ENCODE measurements at regions of chr10 and their contacts with region 1.

Region 1: GRCh38 chr10:14185316-14186045 is 145.2 kb downstream of the FRMD4A start:
- DNase-seq: peak; percentile 84
- ATAC-seq: peak; percentile 93
- H3K4me3 ChIP-seq: peak overlapping the region; percentile 15 to 31 (median 19); a peak in 5 of 6 replicates
- H3K27ac ChIP-seq: peak overlapping the region; percentile 75
- H3K4me1 ChIP-seq: peaks cover 21% of the 10 kb centered on the region
- H3K27me3 ChIP-seq: peaks cover 1 to 6% of the 10 kb centered on the region in 2 experiments; a peak in 3 of 5 replicates
- CTCF ChIP-seq: no peak
- EP300 ChIP-seq: no peak; a peak in 1 of 4 replicates
- POLR2A ChIP-seq: peak; percentile 89 to 100
- RAD21 ChIP-seq: peak; percentile 77

Region 2: GRCh38 chr10:13839430-13839990 is 346.0 kb before region 1 on chr10:
- CTCF ChIA-PET with region 1: no interaction called
- POLR2A ChIA-PET with region 1: no interaction called
- in situ Hi-C with region 1: no loop called
- intact Hi-C with region 1: no loop called
- DNase-seq: no peak
- ATAC-seq: no peak
- H3K4me3 ChIP-seq: no peak overlapping the region
- H3K27ac ChIP-seq: no peak overlapping the region
- H3K4me1 ChIP-seq: no peaks in the 10 kb centered on the region
- H3K27me3 ChIP-seq: no peaks in the 10 kb centered on the region
- CTCF ChIP-seq: no peak
- EP300 ChIP-seq: no peak
- POLR2A ChIP-seq: no peak
- RAD21 ChIP-seq: no peak

Region 3: DNA sequence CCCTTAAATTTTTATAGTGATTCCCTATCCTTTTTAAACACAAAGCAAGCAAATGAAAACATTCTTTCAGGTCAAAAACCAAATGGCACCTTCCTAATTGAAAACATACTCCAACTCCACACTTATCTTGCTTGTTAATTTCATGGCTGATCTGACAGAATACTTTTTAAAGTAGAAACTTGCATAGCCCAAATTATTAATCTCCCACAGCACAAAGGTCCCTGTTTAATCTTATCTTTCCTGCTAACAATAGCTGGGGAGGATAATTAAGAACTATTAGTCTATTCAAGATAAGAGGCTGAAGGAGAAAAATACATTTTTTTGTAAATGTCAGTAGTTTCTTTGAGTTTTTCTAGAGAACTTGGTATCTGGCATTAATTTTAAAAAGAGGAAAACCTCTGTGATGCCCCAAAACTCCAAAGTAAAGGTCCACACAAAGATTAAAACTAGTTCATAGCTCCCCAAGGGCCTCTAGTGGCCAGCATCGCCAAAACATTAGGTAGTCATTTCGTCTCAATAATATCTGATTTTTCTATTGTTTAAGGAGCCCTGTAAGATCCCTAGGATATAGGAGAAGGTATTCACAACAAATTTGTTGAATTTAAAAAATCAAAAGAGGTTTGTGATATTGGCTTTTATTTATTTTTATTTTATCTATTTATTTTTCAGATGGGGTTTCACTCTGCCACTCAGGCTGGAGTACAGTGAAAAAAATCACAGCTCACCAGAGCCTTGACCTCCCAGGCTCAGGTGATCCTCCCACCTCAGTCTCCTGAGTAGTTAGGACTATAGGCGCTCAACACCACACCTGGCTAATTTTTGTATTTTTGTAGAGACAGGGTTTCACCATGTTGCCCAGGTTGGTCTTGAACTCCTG is 637.6 kb after region 1 on chr10:
- CTCF ChIA-PET with region 1: no interaction called
- POLR2A ChIA-PET with region 1: no interaction called
- in situ Hi-C with region 1: loop called (anchors 25 kb)
- intact Hi-C with region 1: no loop called
- DNase-seq: peak; percentile 12
- ATAC-seq: peak; percentile 44; the same call in 1 of the 3 replicates
- H3K4me3 ChIP-seq: no peak overlapping the region
- H3K27ac ChIP-seq: no peak overlapping the region
- H3K4me1 ChIP-seq: no peaks in the 10 kb centered on the region
- H3K27me3 ChIP-seq: peaks cover 0 to 1% of the 10 kb centered on the region in 2 experiments; a peak in 1 of 5 replicates
- CTCF ChIP-seq: peak; percentile 55
- EP300 ChIP-seq: no peak
- POLR2A ChIP-seq: no peak
- RAD21 ChIP-seq: 0 out of 2 replicates have a peak, but pooled peaks have one; percentile 44